IMR-90 (cell line): ENCODE measurements at regions of chr12 and their contacts with region 1.

Region 1: GRCh38 chr12:20646239-20646827 is 48.8 kb upstream of the SLCO1C1 start:
- DNase-seq: peak; percentile 60
- ATAC-seq: peak; percentile 85
- H3K4me3 ChIP-seq: no peak overlapping the region
- H3K27ac ChIP-seq: no peak overlapping the region
- H3K4me1 ChIP-seq: no peaks in the 10 kb centered on the region
- H3K27me3 ChIP-seq: no peaks in the 10 kb centered on the region
- CTCF ChIP-seq: peak; percentile 65
- POLR2A ChIP-seq: no peak
- RAD21 ChIP-seq: peak; percentile 64

Region 2: DNA sequence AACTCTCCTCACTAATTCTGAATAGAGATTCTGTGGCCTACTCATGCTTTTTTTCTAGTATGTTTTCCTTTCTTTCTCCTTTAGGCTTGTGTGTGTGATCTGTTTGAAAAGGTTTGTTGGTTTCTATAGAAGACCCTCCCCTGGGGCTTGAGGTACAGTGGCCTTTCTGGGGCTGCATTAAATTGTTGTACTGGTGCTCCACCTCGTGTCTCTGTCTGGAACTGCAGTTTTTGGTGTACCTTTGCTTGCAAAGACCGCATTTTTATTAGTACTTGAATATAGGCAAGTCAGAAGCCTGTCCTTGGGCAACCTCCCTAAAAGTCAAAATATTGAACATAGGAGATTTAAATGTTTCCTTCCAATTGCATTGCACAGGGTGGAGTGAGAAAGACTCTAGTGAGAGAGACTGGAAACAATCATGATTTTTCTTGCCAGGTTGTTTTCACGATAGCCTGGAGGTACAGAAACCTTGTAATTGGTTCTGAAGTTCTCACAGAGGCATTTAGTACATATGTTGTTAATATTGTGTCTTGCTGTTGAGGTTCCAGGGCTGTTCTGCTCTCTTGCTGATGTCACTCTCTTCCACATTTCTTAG is 523.6 kb after region 1 on chr12:
- CTCF ChIA-PET with region 1: no interaction called
- POLR2A ChIA-PET with region 1: no interaction called
- dilution Hi-C with region 1: no loop called
- in situ Hi-C with region 1: loop called (anchors 10 kb)
- intact Hi-C with region 1: loop called (anchors 1 kb)
- DNase-seq: peak; percentile 25
- ATAC-seq: peak; percentile 77
- H3K4me3 ChIP-seq: no peak overlapping the region
- H3K27ac ChIP-seq: no peak overlapping the region
- H3K4me1 ChIP-seq: no peaks in the 10 kb centered on the region
- H3K27me3 ChIP-seq: no peaks in the 10 kb centered on the region
- CTCF ChIP-seq: peak; percentile 56
- POLR2A ChIP-seq: no peak
- RAD21 ChIP-seq: peak; percentile 59

Region 3: GRCh38 chr12:21438643-21439042 is 792.3 kb after region 1 on chr12:
- CTCF ChIA-PET with region 1: no interaction called
- POLR2A ChIA-PET with region 1: no interaction called
- dilution Hi-C with region 1: no loop called
- in situ Hi-C with region 1: loop called (anchors 25 kb)
- intact Hi-C with region 1: no loop called
- DNase-seq: peak; percentile 12
- ATAC-seq: no peak
- H3K4me3 ChIP-seq: no peak overlapping the region
- H3K27ac ChIP-seq: no peak overlapping the region
- H3K4me1 ChIP-seq: no peaks in the 10 kb centered on the region; the same call in 1 of the 2 replicates
- H3K27me3 ChIP-seq: no peaks in the 10 kb centered on the region; the same call in 1 of the 2 replicates
- CTCF ChIP-seq: no peak
- POLR2A ChIP-seq: no peak
- RAD21 ChIP-seq: no peak